Activated CD4-positive, alpha-beta T cell treated with anti-CD3 and anti-CD28 coated beads for 36 hours (primary cell): ENCODE measurements at regions of chr2 and their contacts with region 1.

Region 1: DNA sequence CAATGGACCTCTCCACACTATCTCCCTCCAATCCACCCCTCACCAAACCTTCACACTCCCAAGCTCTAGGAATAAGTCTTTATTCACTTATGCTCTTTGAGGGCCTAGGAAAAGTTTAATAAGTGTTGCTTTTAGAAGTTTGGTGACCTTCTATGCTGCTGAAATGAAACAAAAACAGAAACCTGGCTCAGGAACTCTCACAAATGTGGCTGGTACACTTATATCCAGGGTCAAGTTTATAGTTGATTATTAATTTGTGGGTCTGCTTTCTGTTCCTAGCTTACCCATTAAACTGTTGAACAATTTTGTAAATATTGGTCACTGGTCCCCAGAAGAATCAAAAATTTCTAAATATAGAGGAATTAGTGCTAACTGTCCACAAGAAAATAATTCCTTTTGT is 14.2 kb upstream of the ANKRD44 start:
- DNase-seq: no peak
- ATAC-seq: no peak
- H3K4me3 Mint-ChIP-seq: peak overlapping the region; percentile 55
- H3K27ac Mint-ChIP-seq: peak overlapping the region; percentile 93
- H3K4me1 Mint-ChIP-seq: peaks cover 81% of the 10 kb centered on the region
- H3K27me3 Mint-ChIP-seq: no peaks in the 10 kb centered on the region

Region 2: GRCh38 chr2:197073701-197074433 is 250.9 kb before region 1 on chr2:
- CTCF ChIA-PET with region 1: no interaction called
- POLR2A ChIA-PET with region 1: no interaction called
- intact Hi-C with region 1: no loop called
- DNase-seq: no peak
- ATAC-seq: peak; percentile 33
- H3K4me3 Mint-ChIP-seq: no peak overlapping the region
- H3K27ac Mint-ChIP-seq: peak overlapping the region; percentile 34
- H3K4me1 Mint-ChIP-seq: peaks cover 52% of the 10 kb centered on the region
- H3K27me3 Mint-ChIP-seq: no peaks in the 10 kb centered on the region

Region 3: GRCh38 chr2:197339496-197340220 is 14.9 kb after region 1 on chr2:
- CTCF ChIA-PET with region 1: interaction called, 10 read pairs
- POLR2A ChIA-PET with region 1: no interaction called
- intact Hi-C with region 1: no loop called
- DNase-seq: no peak
- ATAC-seq: peak; percentile 30
- H3K4me3 Mint-ChIP-seq: no peak overlapping the region
- H3K27ac Mint-ChIP-seq: peak overlapping the region; percentile 40
- H3K4me1 Mint-ChIP-seq: peaks cover 24% of the 10 kb centered on the region
- H3K27me3 Mint-ChIP-seq: no peaks in the 10 kb centered on the region

Region 4: DNA sequence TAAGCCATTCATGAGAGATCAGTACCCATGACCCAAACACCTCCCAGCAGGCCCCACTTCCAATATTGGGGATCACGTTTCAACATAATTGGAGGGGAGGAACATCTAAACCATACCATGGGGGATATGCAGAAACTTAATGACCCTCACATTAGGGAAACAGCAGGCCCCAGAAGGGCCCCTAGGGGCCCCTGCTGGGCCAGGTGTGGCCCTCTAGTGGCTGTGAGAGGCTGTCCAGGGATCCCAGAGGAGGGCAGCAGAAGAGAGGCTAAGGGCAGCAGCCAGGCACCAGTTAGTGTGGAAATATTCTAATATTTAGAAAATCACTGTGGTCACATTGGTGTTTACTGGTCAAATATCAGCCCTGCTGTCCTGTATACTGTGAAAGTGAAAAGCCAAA is 35.1 kb after region 1 on chr2:
- CTCF ChIA-PET with region 1: interaction called, 5 read pairs
- POLR2A ChIA-PET with region 1: interaction called, 4 read pairs
- intact Hi-C with region 1: loop called in 1 of 2 experiments (anchors 2 kb)
- DNase-seq: no peak
- ATAC-seq: no peak
- H3K4me3 Mint-ChIP-seq: no peak overlapping the region
- H3K27ac Mint-ChIP-seq: no peak overlapping the region
- H3K4me1 Mint-ChIP-seq: peaks cover 42% of the 10 kb centered on the region
- H3K27me3 Mint-ChIP-seq: no peaks in the 10 kb centered on the region